Activated CD4-positive, alpha-beta T cell treated with anti-CD3 and anti-CD28 coated beads for 36 hours (primary cell): ENCODE measurements at regions of chr3 and their contacts with region 1.

Region 1: GRCh38 chr3:47130557-47130956 is 33.4 kb downstream of the SETD2 start:
- DNase-seq: no peak
- ATAC-seq: no peak
- H3K4me3 Mint-ChIP-seq: no peak overlapping the region
- H3K27ac Mint-ChIP-seq: no peak overlapping the region
- H3K4me1 Mint-ChIP-seq: peaks cover 48% of the 10 kb centered on the region
- H3K27me3 Mint-ChIP-seq: no peaks in the 10 kb centered on the region

Region 2: GRCh38 chr3:47113669-47114365 is 16.7 kb before region 1 on chr3:
- CTCF ChIA-PET with region 1: interaction called, 10 read pairs
- POLR2A ChIA-PET with region 1: no interaction called
- intact Hi-C with region 1: no loop called
- DNase-seq: no peak
- ATAC-seq: no peak
- H3K4me3 Mint-ChIP-seq: no peak overlapping the region
- H3K27ac Mint-ChIP-seq: no peak overlapping the region
- H3K4me1 Mint-ChIP-seq: peaks cover 14% of the 10 kb centered on the region
- H3K27me3 Mint-ChIP-seq: no peaks in the 10 kb centered on the region